ENCODE measurements at regions of chr13 and their contacts with region 1.

Region 1: DNA sequence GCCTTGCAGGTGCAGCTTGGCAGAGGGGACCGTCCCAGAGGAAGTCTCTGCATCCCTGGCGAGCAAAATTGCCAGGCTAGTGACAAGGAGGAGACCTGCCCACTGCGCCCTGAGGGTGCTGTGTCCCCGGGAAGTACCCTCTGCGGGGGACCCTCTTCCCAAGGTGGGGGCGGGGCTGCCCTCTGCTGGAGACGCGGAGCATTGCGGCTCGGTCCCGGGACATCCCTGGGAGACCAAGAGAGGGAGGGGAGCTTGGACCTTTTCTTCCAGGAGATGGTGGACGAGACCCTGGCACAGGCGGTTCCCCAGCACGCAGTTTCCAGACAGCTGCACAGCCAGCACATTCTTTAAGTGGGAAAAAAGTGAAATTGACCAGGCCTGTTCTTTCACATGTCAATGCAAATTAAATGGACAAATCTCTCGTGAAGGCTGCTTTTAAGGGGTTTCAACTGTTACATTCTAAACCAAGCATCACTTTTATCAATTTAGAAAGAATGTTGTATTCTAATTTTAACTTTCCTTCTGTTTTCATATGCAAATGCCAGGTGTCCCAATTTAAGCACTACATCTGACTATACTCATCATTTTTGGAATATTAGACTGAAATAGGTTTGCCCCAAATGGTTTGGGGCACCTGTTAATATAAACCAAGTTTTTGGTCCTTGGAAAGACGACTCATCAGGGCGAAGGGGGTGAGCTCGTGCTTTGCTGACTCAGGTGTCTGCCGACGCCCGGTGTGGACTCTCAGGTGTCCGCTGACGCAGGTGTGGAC is 60.7 kb downstream of the MCF2L start:
- DNase-seq: peak in 1 of 2 experiments; percentile 97
- H3K4me3 ChIP-seq: no peak overlapping the region
- H3K27ac ChIP-seq: no peak overlapping the region
- H3K4me1 ChIP-seq: peaks cover 0 to 3% (median 0%) of the 10 kb centered on the region in 4 experiments; a peak in 2 of 7 replicates
- H3K27me3 ChIP-seq: no peaks in the 10 kb centered on the region
- CTCF ChIP-seq: peak in 2 of 3 experiments; percentile 89 to 96; a peak in 3 of 4 replicates
- EP300 ChIP-seq: no peak
- POLR2A ChIP-seq: no peak
- RAD21 ChIP-seq: peak; percentile 85 to 90

Region 2: GRCh38 chr13:112849500-112849899 is 180.2 kb before region 1 on chr13:
- CTCF ChIA-PET with region 1: no interaction called
- POLR2A ChIA-PET with region 1: no interaction called
- DNase-seq: no peak
- H3K4me3 ChIP-seq: no peak overlapping the region
- H3K27ac ChIP-seq: no peak overlapping the region
- H3K4me1 ChIP-seq: no peaks in the 10 kb centered on the region
- H3K27me3 ChIP-seq: no peaks in the 10 kb centered on the region
- CTCF ChIP-seq: no peak
- EP300 ChIP-seq: no peak
- POLR2A ChIP-seq: no peak
- RAD21 ChIP-seq: no peak

Region 3: GRCh38 chr13:112859817-112860190 is 169.9 kb before region 1 on chr13:
- CTCF ChIA-PET with region 1: no interaction called
- POLR2A ChIA-PET with region 1: no interaction called
- DNase-seq: no peak
- H3K4me3 ChIP-seq: no peak overlapping the region
- H3K27ac ChIP-seq: no peak overlapping the region
- H3K4me1 ChIP-seq: no peaks in the 10 kb centered on the region
- H3K27me3 ChIP-seq: no peaks in the 10 kb centered on the region
- CTCF ChIP-seq: no peak
- EP300 ChIP-seq: no peak
- POLR2A ChIP-seq: no peak
- RAD21 ChIP-seq: no peak

Region 4: GRCh38 chr13:112912726-112913540 is 116.7 kb before region 1 on chr13:
- CTCF ChIA-PET with region 1: no interaction called
- POLR2A ChIA-PET with region 1: no interaction called
- DNase-seq: no peak
- H3K4me3 ChIP-seq: no peak overlapping the region
- H3K27ac ChIP-seq: no peak overlapping the region
- H3K4me1 ChIP-seq: peaks cover 0 to 9% (median 0%) of the 10 kb centered on the region in 4 experiments; a peak in 2 of 7 replicates
- H3K27me3 ChIP-seq: no peaks in the 10 kb centered on the region
- CTCF ChIP-seq: no peak
- EP300 ChIP-seq: no peak
- POLR2A ChIP-seq: no peak
- RAD21 ChIP-seq: no peak

Region 5: DNA sequence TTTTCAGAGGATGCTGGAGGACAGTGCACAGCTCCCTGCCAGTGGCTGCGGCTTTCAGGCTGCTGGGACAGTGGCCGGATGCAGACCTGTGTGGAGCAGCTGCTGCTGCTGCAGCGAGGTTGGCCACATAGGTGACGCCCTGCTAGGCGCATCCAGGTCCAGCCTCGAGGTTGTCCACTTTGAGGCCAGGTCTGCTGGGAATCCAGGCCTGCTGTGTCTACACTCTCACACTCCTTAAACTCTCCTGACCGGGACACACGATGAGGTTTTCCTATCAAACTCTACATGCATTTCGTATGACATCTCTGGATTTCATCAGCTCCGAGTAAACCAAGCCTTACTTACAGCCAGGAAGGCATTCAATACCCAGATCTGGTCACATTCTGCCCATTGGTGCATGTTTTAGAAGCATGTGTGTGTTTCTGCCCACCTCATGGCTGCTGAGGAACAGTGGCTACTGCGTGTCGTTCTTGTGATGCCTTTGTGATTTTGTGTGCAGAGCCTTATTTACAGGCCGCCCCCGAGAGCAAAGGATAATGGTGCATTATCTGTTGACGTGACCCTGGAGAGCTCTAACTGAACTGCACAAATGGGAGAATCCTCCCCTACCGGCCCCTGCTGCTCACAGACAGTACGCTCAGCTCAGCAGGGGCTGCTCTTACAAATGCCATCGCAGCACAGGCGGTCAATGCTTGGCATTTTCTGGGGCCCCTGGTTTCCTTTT is 72.9 kb before region 1 on chr13:
- CTCF ChIA-PET with region 1: interaction called, 28 read pairs
- POLR2A ChIA-PET with region 1: no interaction called
- DNase-seq: no peak
- H3K4me3 ChIP-seq: no peak overlapping the region
- H3K27ac ChIP-seq: no peak overlapping the region
- H3K4me1 ChIP-seq: peaks cover 3 to 16% (median 9%) of the 10 kb centered on the region in 4 experiments
- H3K27me3 ChIP-seq: no peaks in the 10 kb centered on the region
- CTCF ChIP-seq: no peak
- EP300 ChIP-seq: no peak
- POLR2A ChIP-seq: no peak
- RAD21 ChIP-seq: no peak

Region 6: DNA sequence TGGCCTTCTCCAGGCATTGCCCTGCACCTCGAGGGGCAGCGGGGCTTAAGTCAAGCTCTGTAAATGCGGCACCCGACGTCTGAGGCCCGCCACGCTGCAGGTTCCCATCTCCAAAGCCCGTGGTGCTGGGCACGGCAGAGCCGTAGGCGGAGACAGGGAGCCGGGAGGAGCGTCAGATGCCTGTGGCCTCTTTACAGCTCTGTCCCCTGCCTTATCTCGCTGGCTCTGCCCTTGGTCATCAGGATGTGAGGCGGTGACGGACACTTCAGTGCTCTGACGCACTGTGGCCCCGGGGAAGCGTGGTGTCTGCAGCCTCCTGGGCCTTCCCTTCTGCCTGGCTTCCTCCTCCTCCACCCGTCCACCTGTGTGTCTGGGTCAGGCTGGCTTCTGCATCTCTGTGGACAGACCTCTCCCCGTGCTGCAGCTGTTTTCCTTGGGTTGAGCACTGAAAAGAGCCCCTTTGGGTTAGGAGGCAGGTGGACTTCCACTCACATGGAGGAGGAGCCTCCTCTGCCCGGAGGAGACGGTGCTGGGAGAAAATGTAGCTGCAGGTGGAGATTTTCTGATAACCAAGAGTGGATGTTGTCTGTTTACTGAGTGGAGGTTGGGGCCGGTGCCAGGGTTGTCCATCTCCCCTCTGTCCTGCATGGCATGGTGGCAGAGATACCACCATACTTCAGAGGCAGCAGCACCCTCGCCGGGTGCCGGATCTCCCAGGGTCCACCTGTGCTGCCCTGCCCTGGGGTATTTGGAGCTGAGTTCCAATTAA is 46.1 kb before region 1 on chr13:
- CTCF ChIA-PET with region 1: interaction called, 34 read pairs
- POLR2A ChIA-PET with region 1: no interaction called
- DNase-seq: no peak
- H3K4me3 ChIP-seq: no peak overlapping the region
- H3K27ac ChIP-seq: no peak overlapping the region
- H3K4me1 ChIP-seq: peaks cover 0 to 7% (median under 1%) of the 10 kb centered on the region in 4 experiments; a peak in 3 of 7 replicates
- H3K27me3 ChIP-seq: no peaks in the 10 kb centered on the region
- CTCF ChIP-seq: no peak
- EP300 ChIP-seq: no peak
- POLR2A ChIP-seq: no peak
- RAD21 ChIP-seq: no peak

Region 7: GRCh38 chr13:113001241-113002140 is 28.2 kb before region 1 on chr13:
- CTCF ChIA-PET with region 1: interaction called, 19 read pairs
- POLR2A ChIA-PET with region 1: no interaction called
- DNase-seq: no peak
- H3K4me3 ChIP-seq: no peak overlapping the region
- H3K27ac ChIP-seq: no peak overlapping the region
- H3K4me1 ChIP-seq: peaks cover 0 to 4% (median 1%) of the 10 kb centered on the region in 4 experiments; a peak in 1 of 7 replicates
- H3K27me3 ChIP-seq: no peaks in the 10 kb centered on the region
- CTCF ChIP-seq: no peak
- EP300 ChIP-seq: no peak
- POLR2A ChIP-seq: no peak
- RAD21 ChIP-seq: no peak

Region 8: DNA sequence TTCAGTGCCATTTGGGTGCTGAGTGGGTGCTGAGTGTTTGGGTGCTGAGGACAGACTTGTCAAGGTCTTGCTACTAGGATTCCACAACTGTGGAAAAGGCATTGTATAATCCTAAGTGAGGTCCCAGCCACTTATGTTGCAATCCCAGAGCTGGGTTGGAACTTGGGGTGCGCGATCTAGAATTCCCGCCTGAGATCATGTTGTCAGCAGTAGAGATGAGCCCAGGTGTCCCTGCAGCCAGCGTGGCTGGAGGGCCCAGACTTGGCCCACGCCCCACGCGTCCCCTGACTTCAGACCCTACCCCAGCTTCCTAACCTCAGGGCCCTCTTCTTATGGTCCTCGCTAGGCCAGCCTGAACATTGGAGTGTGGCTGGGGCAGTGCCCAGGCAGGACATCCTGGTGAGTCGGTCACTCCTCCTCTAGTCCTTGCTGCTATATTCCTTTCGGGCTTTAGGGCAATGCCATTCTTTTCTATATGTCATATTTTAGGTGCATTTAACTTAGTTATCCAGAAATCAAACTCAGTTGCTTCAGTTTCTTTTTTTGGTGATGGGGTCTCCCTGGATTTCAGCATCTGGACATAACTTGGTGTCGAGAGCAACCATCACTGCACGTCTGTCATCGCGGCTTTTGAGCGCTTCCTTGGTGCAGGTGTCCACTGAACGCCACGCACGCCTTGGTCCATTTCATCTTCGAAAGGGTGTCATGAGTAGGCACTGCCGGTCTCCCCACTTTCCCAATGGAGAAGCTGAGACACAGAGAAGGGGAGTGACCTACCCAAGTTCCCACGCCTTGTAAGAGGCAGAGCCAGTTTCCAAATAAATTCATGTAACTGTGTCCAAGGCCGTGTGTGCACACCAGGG is 29.5 kb after region 1 on chr13:
- CTCF ChIA-PET with region 1: interaction called, 19 read pairs
- POLR2A ChIA-PET with region 1: no interaction called
- DNase-seq: no peak
- H3K4me3 ChIP-seq: no peak overlapping the region
- H3K27ac ChIP-seq: no peak overlapping the region
- H3K4me1 ChIP-seq: peaks cover 0 to 6% (median 2%) of the 10 kb centered on the region in 4 experiments; a peak in 2 of 7 replicates
- H3K27me3 ChIP-seq: no peaks in the 10 kb centered on the region
- CTCF ChIP-seq: no peak
- EP300 ChIP-seq: no peak
- POLR2A ChIP-seq: no peak
- RAD21 ChIP-seq: no peak

Region 9: DNA sequence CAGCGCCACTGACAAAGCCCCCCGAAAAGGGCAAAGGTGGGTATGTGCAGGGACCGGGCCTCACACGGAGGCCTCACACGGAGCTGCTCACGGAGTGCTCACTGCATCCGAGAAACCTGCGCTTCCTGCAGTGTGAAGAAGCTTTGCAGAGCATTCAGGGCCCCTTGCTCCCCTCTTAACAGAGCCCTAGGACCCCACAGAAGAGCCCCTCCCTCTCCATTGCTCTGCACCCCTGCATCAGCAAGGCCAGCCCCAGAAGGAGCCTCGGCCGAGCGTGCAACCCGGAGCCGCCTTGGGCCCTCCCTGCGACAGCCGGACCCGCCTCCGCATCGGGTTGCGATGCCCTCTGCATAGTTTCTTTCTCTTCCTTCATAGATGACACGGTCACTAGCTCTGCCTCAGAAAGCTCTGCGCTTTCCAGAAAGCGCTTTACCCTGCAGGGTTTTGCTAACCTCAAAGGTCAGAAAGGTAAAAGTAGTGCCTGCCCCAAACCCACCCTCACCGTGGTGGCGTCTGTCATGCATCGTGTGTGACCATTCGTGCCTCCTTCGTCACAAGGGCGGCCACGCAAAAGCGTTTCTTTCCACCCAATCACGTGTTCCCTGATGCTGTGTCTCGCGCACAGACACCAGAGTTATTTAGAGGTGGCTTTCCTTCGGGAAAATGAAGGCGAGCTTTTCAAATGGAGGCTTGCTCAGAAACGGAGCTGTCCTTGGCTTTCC is 60.2 kb after region 1 on chr13:
- CTCF ChIA-PET with region 1: interaction called, 16 read pairs
- POLR2A ChIA-PET with region 1: no interaction called
- DNase-seq: no peak
- H3K4me3 ChIP-seq: no peak overlapping the region
- H3K27ac ChIP-seq: no peak overlapping the region
- H3K4me1 ChIP-seq: peaks cover 0 to 6% (median 4%) of the 10 kb centered on the region in 4 experiments; a peak in 2 of 7 replicates
- H3K27me3 ChIP-seq: no peaks in the 10 kb centered on the region
- CTCF ChIP-seq: no peak
- EP300 ChIP-seq: no peak
- POLR2A ChIP-seq: peak in 1 of 2 experiments; percentile 72; a peak in 1 of 3 replicates
- RAD21 ChIP-seq: no peak

Region 10: GRCh38 chr13:113291949-113292862 is 262.5 kb after region 1 on chr13:
- CTCF ChIA-PET with region 1: no interaction called
- POLR2A ChIA-PET with region 1: no interaction called
- DNase-seq: peak in 1 of 2 experiments; percentile 53
- H3K4me3 ChIP-seq: peak overlapping the region; percentile 20 to 49 (median 30); a peak in 6 of 8 replicates
- H3K27ac ChIP-seq: no peak overlapping the region
- H3K4me1 ChIP-seq: peaks cover 0 to 5% (median 3%) of the 10 kb centered on the region in 4 experiments; a peak in 4 of 7 replicates
- H3K27me3 ChIP-seq: peaks cover 0 to 2% (median 0%) of the 10 kb centered on the region in 4 experiments; a peak in 4 of 7 replicates
- CTCF ChIP-seq: no peak
- EP300 ChIP-seq: no peak
- POLR2A ChIP-seq: peak in 1 of 2 experiments; percentile 18; a peak in 1 of 3 replicates
- RAD21 ChIP-seq: peak in 1 of 2 experiments; percentile 5; a peak in 1 of 4 replicates